ENCODE measurements at regions of chr1 and their contacts with region 1.

Region 1: DNA sequence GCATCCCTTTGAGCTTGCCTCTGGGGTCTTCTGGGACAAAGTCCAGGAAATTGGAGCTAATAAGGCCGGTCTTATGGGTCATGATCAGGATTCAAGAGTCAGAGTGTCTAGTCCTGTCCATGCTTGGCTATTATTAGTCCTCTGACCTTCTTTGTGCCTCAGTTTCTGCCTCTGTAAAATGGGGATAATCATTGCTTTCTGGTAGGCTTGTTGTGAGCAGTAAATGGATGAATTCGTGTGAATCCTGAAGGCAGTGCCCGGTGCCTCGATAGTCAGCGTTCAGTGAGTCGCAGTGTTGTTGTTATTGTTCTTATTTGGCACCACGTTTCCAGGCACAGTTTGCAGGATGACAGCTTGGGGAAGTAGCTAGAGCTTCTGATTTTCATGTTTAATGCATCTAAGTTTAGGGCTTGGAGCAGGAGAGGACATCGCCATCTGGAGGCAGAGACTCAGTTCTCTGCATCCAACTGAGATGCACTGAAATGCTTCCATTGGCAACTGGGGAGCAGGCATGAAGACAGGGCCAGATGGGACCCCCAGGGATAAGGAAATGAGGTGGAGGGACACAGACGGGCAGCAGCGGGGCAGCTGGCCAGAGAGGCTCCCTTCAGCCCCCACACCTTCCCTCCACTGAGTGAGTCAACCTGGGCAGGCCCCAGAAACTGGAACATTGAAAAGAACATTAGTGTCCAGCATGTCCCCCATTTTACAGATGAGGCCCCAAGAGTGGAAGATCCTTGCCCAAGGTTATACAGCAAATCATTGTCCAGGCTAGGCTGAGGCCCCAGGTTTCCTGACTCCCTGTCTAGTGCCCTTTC is 160.3 kb downstream of the PTPRU start:
- DNase-seq: no peak
- H3K4me3 ChIP-seq: no peak overlapping the region
- CTCF ChIP-seq: peak; percentile 31

Region 2: DNA sequence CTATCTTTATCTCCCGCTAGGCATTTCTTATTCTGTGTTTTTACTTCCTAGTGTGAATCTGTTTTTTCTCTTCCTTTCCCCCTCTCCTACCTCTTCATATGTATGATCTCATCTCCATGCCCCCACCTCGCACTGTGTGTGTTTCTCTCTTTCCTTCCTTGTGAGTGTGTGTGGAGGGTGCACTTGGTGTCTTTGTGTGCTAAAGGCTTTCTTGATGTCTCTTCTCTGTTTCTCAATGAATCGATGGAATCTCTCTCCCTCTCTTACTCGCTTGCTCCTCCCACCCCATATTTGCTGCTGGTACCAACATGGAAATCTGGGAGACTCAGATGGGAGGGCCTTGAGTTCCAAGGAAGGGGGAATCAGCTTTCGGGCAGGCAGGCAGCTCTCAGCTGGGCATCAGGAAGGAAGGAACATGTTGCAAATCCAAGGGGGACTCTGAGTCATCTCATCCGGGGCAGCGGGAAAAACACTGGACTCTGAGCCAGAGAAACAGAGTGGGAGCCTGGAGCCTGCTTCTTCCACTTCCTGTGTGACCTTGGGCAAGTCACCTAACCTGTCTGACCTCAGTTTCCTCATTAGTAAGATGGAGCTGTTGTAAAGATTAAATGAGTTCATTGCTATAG is 12.8 kb before region 1 on chr1:
- CTCF ChIA-PET with region 1: interaction called, 24 read pairs
- POLR2A ChIA-PET with region 1: no interaction called
- DNase-seq: no peak
- H3K4me3 ChIP-seq: no peak overlapping the region
- CTCF ChIP-seq: no peak

Measured in AG04449 (cell line).